Activated CD4-positive, alpha-beta T cell treated with anti-CD3 and anti-CD28 coated beads, Interleukin-2, amount 10 ng/mL, durations not matched to agents 24 days and 14 days (primary cell): ENCODE measurements at regions of chr4 and their contacts with region 1.

Region 1: DNA sequence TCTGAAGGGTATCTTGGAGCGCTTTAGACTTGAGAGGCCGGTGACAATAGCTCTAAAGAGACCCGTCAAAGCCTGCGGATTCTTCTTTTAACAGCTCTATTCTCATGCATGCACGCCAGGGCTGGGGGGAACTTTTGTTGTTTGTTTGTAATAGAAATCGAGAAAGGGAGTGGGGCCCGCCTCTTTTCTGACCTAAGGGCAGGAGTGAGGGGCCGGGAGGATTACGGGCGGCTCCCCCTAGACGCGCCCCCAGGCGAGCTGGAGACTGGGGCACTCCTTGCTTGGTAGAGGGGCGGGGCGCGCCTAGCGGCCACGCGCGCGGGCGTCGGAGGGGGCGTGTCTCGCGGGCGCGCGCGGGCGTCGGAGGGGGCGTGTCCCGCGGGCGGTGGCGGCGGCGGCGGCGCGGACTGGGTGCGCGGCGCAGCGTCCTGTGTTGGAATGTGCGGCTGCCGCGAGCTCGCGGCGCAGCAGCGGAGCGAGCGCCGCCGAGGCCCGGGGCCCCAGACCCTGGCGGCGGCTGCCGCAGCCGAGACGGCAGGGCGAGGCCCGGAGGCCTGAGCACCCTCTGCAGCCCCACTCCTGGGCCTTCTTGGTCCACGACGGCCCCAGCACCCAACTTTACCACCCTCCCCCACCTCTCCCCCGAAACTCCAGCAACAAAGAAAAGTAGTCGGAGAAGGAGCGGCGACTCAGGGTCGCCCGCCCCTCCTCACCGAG is at the start of gene REST:
- DNase-seq: peak; percentile 96
- H3K4me3 Mint-ChIP-seq: peak within 1 kb of the TSS; percentile 92
- H3K27ac Mint-ChIP-seq: peak within 1 kb of the TSS; percentile 87
- H3K4me1 Mint-ChIP-seq: peaks cover 35% of the 10 kb centered on the region
- H3K27me3 Mint-ChIP-seq: peaks cover 9% of the 10 kb centered on the region
- total RNA-seq, gene REST: 53.4 and 56.0 TPM in 2 replicates

Region 2: GRCh38 chr4:56467284-56468096 is 440.2 kb before region 1 on chr4 and contains the start of gene SRP72:
- intact Hi-C with region 1: loop called (anchors 1 kb)
- DNase-seq: peak; percentile 97
- H3K4me3 Mint-ChIP-seq: peak within 1 kb of the TSS; percentile 94
- H3K27ac Mint-ChIP-seq: peak within 1 kb of the TSS; percentile 95
- H3K4me1 Mint-ChIP-seq: peaks cover 45% of the 10 kb centered on the region
- H3K27me3 Mint-ChIP-seq: no peaks in the 10 kb centered on the region
- total RNA-seq, gene SRP72: 202 and 209 TPM in 2 replicates

Region 3: DNA sequence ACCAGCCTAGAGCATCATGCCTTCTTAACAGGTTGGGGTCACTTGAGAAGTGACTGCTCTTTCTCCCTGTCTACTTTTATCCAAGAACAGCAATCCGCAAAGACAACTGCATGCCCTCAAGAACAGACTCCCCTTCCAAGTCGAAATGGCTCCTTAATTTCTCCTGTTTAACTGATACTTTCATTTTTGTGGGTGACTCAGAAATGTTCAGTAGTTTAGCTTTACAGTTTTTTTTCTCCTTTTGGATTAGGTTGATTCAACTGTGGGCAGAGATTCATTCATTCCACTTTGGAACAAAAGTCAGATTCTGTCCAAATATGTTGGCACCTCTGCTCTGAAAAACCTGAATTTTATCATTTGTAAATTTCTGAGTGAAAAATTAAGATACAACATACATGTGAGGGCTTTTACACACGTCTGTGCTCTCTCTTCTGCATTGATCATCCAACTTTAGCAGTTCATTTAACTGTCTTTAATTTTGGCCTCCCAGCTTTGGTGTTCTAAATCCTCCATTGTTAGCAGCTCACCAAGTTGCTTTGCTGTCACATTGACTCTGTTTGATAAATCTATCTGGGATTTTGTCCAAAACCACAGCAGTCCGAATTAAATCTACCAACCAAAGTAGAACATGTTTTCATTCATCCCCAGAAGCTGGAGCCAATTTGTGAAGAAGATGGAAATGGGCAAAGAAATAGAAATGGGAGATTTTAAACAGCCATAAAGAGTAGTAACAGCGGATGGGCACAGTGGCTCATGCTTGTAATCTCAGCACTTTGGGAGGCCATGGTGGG is 276.6 kb before region 1 on chr4:
- intact Hi-C with region 1: no loop called
- DNase-seq: no peak
- H3K4me3 Mint-ChIP-seq: no peak overlapping the region
- H3K27ac Mint-ChIP-seq: no peak overlapping the region
- H3K4me1 Mint-ChIP-seq: peaks cover 3% of the 10 kb centered on the region
- H3K27me3 Mint-ChIP-seq: peaks cover 4% of the 10 kb centered on the region

Region 4: DNA sequence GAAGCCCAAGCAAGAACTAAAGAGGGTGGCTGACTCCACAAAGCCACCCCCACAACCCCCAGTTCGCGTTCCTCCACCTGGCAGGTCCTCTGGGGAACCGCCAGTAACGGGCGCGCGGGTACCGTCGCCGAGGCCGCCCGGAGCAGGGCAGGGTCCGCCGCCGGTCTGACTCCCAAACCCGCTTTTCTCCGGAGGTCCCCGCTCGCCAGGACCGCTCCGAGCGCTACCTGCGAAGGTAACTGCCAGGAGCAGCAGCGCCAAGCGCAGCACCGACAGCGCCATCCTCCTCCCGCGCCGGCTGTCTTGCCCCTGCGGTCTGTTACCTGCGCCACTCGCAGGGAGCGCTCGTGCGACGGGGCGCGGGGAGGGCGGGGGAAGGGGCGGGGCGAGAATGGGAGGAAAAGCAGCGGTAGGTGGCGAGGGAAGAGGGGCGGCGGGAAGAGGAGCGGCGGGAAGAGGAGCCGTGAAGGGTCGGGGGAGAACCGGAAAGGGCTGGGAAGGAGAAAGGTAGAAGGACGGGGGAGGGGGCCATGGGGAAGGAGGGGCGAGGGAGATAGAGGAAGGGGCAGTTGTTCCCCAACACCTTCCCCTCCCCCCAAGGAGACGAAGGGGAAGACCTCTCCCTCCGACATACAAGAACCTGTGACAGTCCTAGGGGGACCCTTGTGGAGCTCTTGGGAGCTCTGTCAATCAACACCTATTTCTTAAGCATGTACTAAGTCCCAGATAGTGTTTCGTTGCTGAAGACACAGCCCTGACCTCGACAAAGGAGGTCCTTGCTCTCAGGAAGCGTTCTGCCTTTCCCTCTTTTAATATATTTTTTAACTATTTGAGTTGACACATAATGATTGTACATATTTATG is 86.0 kb before region 1 on chr4 and contains the start of gene SPINK2:
- intact Hi-C with region 1: loop called (anchors 5 kb)
- DNase-seq: peak; percentile 86
- H3K4me3 Mint-ChIP-seq: peak within 1 kb of the TSS; percentile 72
- H3K27ac Mint-ChIP-seq: no peak within 1 kb of the TSS
- H3K4me1 Mint-ChIP-seq: peaks cover 33% of the 10 kb centered on the region
- H3K27me3 Mint-ChIP-seq: peaks cover 36% of the 10 kb centered on the region
- total RNA-seq, gene SPINK2: 0.37 and 0.54 TPM in 2 replicates

Region 5: DNA sequence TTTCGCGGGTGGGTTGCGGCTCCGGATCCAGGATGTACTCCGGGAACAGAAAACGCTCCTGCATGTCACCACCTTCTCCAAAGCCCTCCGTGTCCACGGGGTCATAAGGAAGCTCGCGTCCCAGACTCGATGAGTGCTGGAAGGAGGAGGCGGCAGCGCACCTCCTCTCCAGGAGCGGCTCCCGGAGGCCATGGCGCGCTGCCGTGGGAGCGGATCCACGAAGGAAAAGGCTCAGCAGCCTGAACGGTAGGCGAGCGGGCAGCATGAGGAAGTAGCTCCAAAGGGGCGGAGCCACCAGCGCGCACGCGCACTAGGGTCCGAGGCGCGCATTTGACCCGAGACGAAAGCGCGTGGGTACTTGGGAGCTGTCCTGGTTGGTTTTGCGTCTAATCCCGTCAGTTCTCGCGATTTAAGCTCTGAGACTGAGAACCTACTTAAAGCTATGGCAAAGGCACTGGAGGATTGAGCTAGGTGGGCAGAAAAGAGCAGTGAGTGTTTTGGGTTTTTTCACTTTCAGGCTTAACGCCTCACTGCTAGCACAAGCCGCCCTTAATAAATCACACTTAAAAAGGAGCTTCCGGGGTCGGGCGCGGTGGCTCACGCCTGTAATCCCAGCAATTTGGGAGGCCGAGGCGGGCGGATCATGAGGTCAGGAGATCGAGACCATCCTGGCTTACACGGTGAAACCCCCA is 69.8 kb after region 1 on chr4 and contains the start of gene NOA1:
- intact Hi-C with region 1: loop called (anchors 1 kb)
- DNase-seq: peak; percentile 100
- H3K4me3 Mint-ChIP-seq: peak within 1 kb of the TSS; percentile 98
- H3K27ac Mint-ChIP-seq: peak within 1 kb of the TSS; percentile 98
- H3K4me1 Mint-ChIP-seq: peaks cover 50% of the 10 kb centered on the region
- H3K27me3 Mint-ChIP-seq: peaks cover 2% of the 10 kb centered on the region
- total RNA-seq, gene NOA1: 17.7 and 18.5 TPM in 2 replicates

Region 6: GRCh38 chr4:57194068-57194611 is 286.5 kb after region 1 on chr4:
- intact Hi-C with region 1: no loop called
- DNase-seq: no peak
- H3K4me3 Mint-ChIP-seq: no peak overlapping the region
- H3K27ac Mint-ChIP-seq: no peak overlapping the region
- H3K4me1 Mint-ChIP-seq: no peaks in the 10 kb centered on the region
- H3K27me3 Mint-ChIP-seq: peaks cover 11% of the 10 kb centered on the region